ENCODE measurements at regions of chr4 and their contacts with region 1.

Region 1: GRCh38 chr4:149264093-149264733 is 551.4 kb downstream of the IQCM start:
- DNase-seq: no peak
- H3K4me3 ChIP-seq: no peak overlapping the region
- H3K27ac ChIP-seq: no peak overlapping the region
- H3K4me1 ChIP-seq: no peaks in the 10 kb centered on the region
- H3K27me3 ChIP-seq: no peaks in the 10 kb centered on the region
- CTCF ChIP-seq: peak; percentile 16 to 69 (median 55)
- POLR2A ChIP-seq: no peak

Region 2: DNA sequence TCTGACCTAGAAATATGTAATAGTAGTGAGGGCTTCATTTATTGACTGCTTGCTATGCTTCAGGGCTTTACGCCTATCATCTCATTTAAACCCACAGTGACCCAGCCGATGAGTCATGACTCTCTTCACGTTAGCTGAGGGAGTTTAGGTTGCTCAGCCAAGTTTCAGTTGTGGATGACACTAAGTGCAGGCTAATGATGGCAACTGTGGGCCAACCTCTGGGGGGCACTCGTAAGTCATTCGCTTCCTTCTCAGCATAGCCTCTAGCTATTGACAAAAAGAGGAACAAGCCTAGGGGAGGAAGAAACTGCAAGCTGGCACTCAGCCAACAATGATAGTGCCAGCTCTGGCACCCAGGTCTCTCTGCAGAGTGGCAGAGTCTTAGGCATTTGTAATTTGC is 1207.3 kb before region 1 on chr4:
- intact Hi-C with region 1: loop called (anchors 5 kb)
- DNase-seq: peak; percentile 87
- H3K4me3 ChIP-seq: peak overlapping the region in 1 of 8 donors; percentile 5
- H3K27ac ChIP-seq: no peak overlapping the region
- H3K4me1 ChIP-seq: peaks cover 6 to 83% (median 38%) of the 10 kb centered on the region in 6 donors
- H3K27me3 ChIP-seq: no peaks in the 10 kb centered on the region
- CTCF ChIP-seq: peak in 9 of 11 experiments; percentile 35 to 67 (median 57)
- POLR2A ChIP-seq: no peak

Region 3: DNA sequence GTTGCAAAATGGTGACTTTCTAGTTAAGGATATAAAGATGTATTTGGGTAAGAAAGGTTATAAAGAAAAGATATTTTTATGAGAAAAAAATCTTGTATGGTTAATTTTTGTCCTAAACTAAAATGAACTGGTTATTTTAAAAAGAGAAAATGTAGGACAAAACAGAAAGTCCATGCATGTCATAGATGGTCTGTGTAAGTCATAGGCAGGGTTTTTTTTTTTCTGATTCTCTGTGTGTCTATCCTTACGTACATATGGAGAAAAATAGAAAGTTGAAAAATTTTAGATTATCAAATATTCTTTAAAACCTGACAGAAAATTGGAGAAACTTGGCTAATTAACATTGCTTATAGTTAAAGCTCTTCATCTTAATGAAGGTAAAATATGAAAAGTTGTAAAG is 58.0 kb after region 1 on chr4:
- intact Hi-C with region 1: no loop called
- DNase-seq: no peak
- H3K4me3 ChIP-seq: no peak overlapping the region
- H3K27ac ChIP-seq: no peak overlapping the region
- H3K4me1 ChIP-seq: no peaks in the 10 kb centered on the region
- H3K27me3 ChIP-seq: no peaks in the 10 kb centered on the region
- CTCF ChIP-seq: no peak
- POLR2A ChIP-seq: no peak

Measured in spleen (tissue), 13 donors.